Prostate gland (tissue), 2 donors: ENCODE measurements at regions of chr20 and their contacts with region 1.

Region 1: GRCh38 chr20:3820048-3820900 is at the start of gene AP5S1:
- DNase-seq: peak; percentile 97
- H3K4me3 ChIP-seq: peak within 1 kb of the TSS; percentile 59 to 63
- H3K27ac ChIP-seq: peak within 1 kb of the TSS; percentile 99
- H3K4me1 ChIP-seq: no peaks in the 10 kb centered on the region
- H3K27me3 ChIP-seq: no peaks in the 10 kb centered on the region
- CTCF ChIP-seq: peak; percentile 98 to 100 (median 100)
- POLR2A ChIP-seq: peak; percentile 29
- total RNA-seq, gene AP5S1: 21.1 to 28.0 TPM

Region 2: DNA sequence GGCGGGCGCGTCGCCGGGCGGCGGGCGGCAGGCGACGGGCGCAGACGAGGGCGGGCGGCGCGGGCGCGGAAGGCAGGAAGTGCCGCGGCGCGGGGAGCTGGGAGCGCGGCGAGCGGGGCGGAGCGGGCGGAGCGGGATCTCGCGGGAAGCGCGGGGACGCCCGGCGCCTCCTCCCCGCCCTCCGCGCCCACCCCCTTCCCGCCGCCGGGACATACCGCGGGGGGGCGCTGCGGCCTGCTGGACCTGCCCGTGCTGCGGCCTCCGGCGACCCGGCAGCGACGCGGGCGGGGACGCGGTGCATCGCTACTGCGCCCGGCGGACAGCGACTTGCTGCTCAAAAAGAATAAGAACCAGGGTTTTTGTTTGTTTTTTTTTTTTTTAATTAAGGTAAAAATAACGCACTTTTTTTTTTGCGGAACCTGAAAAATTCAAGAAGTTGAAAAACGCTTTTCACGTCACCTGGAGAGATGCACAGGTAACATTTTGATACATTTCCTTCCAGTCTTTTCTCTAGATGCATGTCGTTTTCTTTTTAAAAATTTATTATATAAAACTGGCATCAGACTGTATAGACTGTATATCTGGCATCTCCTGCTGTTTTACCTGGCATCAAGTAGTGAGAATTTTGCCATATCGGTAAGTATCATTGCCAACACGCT is 33.5 kb before region 1 on chr20 and contains the start of gene CENPB:
- intact Hi-C with region 1: loop called (anchors 1 kb)
- DNase-seq: peak; percentile 86
- H3K4me3 ChIP-seq: peak within 1 kb of the TSS; percentile 53
- H3K27ac ChIP-seq: peak within 1 kb of the TSS; percentile 67 to 69
- H3K4me1 ChIP-seq: peaks cover 22% of the 10 kb centered on the region
- H3K27me3 ChIP-seq: no peaks in the 10 kb centered on the region
- CTCF ChIP-seq: peak; percentile 62 to 87 (median 84)
- POLR2A ChIP-seq: no peak
- total RNA-seq, gene CENPB: 76.6 to 86.9 TPM

Region 3: DNA sequence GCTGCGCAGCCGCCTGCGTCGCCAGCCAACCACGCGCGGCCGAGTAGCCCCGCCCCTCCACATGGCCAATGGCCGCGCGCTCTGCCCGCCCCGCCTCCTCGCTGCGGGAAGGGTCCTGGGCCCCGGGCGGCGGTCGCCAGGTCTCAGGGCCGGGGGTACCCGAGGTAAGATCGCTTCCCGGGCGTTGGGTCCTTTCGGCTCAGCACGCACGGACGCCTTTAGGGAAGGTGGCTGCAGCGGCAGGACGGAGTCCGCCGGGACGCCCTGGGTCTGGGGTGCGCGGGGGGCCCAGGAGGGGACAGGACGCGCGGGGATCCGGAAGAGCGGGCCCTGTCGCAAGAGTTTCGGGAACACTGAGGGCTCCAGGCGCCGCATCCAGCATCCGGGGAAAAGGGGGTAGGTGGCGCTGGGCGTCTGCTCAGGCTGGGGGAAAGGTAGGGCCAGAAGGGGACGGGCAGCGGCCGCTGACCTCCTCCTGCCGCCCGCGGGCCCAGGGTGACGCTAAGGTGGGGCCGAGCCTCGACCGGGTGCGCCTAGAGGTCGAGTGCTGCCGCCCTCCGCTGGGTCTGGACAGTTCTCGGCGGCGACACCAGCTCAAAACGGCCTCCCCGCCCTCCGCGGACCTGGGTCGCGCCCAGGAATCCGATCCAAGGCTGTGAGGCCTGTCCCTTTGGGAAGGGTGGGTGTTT is 26.6 kb after region 1 on chr20 and contains the start of gene MAVS:
- intact Hi-C with region 1: loop called (anchors 2 kb)
- DNase-seq: peak; percentile 87
- H3K4me3 ChIP-seq: peak within 1 kb of the TSS; percentile 90 to 97
- H3K27ac ChIP-seq: peak within 1 kb of the TSS; percentile 87 to 89
- H3K4me1 ChIP-seq: peaks cover 4% of the 10 kb centered on the region
- H3K27me3 ChIP-seq: no peaks in the 10 kb centered on the region
- CTCF ChIP-seq: peak in 1 of 4 experiments; percentile 28
- POLR2A ChIP-seq: peak; percentile 79
- total RNA-seq, gene MAVS: 26.7 to 40.2 TPM